ENCODE measurements at regions of chr22 and their contacts with region 1.

Region 1: DNA sequence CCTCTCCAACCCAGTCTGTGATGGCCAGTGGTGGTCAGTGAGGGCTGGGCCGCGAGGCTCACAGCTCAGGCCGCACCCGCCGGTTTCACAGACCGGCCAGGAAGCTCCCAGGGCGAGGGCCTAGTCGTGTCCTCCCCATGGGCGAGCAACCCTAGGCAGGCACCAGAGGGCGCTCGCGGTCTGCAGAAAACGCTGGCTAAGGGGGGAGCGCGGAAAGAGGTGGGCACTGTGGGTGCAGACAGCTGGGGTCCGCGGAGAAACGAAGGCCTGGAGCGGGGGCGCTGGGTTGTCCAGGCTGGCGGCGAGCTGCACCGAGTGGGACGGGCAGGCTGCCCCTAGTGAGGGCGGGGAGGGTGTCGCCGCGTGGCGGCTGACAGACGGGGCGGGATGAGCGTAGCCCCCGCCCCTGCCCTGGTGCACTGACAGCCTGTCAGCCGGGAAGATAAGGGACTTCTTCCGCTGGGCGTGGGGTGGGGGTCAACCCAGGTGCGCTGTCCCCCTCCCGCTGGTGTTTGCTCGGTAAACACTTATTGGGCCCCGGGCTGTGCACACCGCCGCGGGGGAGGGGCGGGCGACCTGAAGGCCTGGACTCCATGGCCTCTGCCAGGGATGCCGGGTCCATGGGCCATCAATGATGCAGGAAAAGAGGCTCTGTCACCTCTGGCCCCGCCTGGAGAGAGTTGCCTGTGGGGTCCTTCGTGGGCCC is 7.5 kb downstream of the GP1BB start:
- H3K4me3 ChIP-seq: peak overlapping the region; percentile 38
- H3K27ac ChIP-seq: no peak overlapping the region
- H3K4me1 ChIP-seq: no peaks in the 10 kb centered on the region
- CTCF ChIP-seq: peak; percentile 99

Region 2: DNA sequence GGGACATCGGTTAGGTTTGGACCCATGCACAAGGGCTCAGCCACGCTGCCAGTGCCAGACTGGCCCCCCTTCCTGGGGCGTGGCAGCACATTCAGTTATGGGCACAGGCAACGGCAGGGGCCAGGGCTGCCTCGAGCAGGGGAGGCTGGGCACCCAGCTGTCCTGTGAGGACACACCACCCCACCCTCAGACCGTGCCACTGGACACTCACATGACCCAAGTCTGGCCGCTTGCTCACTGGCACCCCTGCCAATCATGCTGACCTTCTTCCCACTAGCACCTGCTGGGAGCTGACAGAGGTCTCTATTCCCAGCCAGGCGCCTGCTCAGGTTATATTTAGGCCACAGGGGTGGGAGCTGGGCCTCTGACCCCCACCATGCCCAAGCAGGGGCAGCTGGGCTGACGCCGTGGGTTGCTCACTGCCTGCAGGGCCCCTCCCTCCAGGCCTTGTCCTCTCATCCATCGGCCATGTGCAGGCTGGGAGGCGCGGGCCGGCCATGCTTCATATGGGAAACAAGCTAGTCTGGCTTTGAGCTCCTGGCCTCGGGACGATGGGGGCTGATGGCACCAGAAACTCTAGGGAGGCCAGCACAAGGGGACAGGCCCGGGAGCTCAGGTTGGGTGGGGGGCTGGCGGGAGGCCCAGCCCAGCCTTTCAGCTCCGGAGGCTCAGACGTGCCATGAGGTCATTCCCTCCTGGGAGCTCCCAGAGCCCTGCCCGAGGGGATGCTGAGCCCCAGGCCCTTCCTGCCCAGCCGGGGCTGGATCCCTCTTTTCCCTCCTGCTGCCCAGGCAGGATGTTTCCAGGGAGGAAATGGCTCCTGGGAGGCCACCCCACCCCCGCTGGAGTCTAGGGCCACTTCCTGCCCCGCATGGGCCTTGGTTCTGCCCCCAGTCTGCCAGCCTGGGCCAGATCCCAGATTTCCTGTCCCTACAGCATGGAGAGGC is 14.6 kb after region 1 on chr22:
- CTCF ChIA-PET with region 1: interaction called, 25 read pairs
- POLR2A ChIA-PET with region 1: no interaction called
- H3K4me3 ChIP-seq: no peak overlapping the region
- H3K27ac ChIP-seq: no peak overlapping the region
- H3K4me1 ChIP-seq: no peaks in the 10 kb centered on the region
- CTCF ChIP-seq: no peak

Region 3: GRCh38 chr22:19772422-19773324 is 41.9 kb after region 1 on chr22:
- CTCF ChIA-PET with region 1: interaction called, 20 read pairs
- POLR2A ChIA-PET with region 1: no interaction called
- H3K4me3 ChIP-seq: no peak overlapping the region
- H3K27ac ChIP-seq: no peak overlapping the region
- H3K4me1 ChIP-seq: no peaks in the 10 kb centered on the region
- CTCF ChIP-seq: no peak

Region 4: DNA sequence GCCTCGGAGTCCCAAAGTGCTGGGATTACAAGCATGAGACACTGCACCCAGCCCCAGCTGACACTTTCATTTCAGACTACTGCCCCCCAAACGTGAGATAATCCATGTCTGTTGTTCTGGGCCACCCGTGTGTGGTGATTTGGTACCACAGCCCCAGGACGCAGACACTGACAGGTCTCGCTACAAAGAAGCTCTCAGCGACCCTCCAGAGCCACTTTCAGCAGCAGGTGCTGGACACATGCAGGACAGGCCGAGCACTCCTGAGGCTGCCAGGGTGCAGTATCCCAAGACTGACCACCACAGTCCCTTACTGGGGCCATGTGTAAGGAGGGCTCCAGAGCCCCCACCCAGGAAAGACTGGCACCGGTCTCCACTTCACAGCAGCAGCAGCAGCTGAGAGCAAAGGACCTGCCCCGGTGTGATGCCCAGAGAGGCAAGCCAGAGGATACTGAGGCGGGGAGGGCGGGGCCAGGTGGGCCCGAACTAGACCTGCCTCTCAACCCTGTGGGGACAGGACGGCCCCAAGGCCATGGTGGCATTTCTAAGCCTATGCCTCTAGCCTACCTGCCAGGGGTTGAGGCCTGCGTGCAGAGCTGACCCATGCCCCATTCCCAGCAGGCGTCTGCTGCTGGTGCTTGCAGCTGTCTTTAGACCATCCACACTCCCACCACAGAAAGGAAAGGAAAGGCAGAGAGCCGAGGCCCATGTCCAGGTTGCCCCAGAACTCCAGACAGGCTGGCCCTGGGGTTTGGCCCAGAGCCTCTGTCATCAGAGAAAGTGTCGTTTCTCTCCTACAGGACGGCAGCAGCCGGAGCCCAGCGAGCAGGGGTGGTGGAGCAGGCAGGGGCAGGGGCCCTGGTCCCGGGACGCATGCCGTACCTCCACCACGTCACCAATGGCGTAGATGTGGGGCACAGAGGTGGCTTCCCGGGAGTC is 151.9 kb after region 1 on chr22:
- CTCF ChIA-PET with region 1: interaction called, 14 read pairs
- POLR2A ChIA-PET with region 1: no interaction called
- H3K4me3 ChIP-seq: no peak overlapping the region
- H3K27ac ChIP-seq: no peak overlapping the region
- H3K4me1 ChIP-seq: peaks cover 8% of the 10 kb centered on the region
- CTCF ChIP-seq: no peak

Region 5: DNA sequence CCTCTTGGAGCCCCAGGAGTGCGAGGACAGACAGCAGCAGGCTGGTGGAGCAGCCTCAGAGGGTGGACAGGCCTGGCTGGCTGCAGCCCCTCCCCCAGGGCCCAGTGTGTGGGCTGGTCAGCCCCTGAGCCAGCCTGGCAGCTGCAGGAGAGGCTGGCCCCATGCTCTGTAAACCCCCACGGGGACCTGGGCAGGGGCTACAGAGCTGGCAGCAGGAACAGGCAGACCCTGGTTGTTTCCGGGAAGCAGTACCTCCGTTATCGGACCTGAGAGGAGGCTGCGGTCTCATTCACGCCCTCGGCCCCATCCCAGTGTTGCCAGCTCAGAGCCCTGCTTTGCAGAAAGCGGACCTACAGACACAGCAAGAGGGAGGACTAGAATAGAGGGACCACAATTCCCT is 172.2 kb after region 1 on chr22:
- CTCF ChIA-PET with region 1: interaction called, 45 read pairs
- POLR2A ChIA-PET with region 1: no interaction called
- H3K4me3 ChIP-seq: no peak overlapping the region
- H3K27ac ChIP-seq: no peak overlapping the region
- H3K4me1 ChIP-seq: no peaks in the 10 kb centered on the region
- CTCF ChIP-seq: no peak

Region 6: DNA sequence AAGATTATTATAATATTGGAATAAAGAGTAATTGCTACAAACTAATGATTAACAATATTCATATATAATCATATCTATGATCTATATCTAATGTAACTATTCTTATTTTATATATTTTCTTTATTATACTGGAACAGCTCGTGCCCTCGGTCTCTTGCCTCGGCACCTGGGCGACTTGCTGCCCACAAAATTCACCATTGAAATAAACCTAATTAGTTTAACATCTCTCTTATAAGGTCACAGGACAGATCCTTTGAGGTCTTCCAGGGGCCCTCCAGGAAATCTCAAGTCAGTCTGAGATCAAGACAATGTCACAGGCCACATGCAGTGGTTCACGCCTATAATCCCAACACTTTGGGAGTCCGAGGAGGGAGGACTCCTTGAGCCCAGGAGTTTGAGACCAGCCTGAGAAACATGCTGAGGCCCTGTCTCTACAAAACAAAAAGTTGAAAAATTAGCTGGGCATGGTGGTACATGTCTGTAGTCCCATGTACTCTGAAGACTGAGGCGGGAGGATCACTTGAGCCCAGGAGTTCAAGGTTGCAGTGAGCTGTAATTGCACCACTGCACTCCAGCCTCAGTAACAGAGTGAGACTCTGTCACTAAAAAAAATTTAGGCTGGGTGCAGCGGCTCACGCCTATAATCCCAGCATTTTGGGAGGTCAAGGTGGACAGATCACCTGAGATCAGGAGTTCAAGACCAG is 217.4 kb after region 1 on chr22:
- CTCF ChIA-PET with region 1: interaction called, 33 read pairs
- POLR2A ChIA-PET with region 1: interaction called, 4 read pairs
- H3K4me3 ChIP-seq: no peak overlapping the region
- H3K27ac ChIP-seq: no peak overlapping the region
- H3K4me1 ChIP-seq: no peaks in the 10 kb centered on the region; the same call in 1 of the 2 replicates
- CTCF ChIP-seq: no peak

Measured in HEK293 (cell line).